Common myeloid progenitor, CD34-positive (primary cell): ENCODE measurements at regions of chr22 and their contacts with region 1.

Region 1: GRCh38 chr22:50293441-50294318 is 13.8 kb downstream of the PLXNB2 start:
- DNase-seq: peak; percentile 53 to 90 (median 88)
- H3K4me3 ChIP-seq: peak overlapping the region in 6 of 7 experiments; percentile 35 to 70 (median 67)
- H3K27ac ChIP-seq: peak overlapping the region; percentile 15 to 74
- H3K4me1 ChIP-seq: peaks cover 0 to 55% (median 52%) of the 10 kb centered on the region in 4 experiments
- H3K27me3 ChIP-seq: no peaks in the 10 kb centered on the region

Region 2: DNA sequence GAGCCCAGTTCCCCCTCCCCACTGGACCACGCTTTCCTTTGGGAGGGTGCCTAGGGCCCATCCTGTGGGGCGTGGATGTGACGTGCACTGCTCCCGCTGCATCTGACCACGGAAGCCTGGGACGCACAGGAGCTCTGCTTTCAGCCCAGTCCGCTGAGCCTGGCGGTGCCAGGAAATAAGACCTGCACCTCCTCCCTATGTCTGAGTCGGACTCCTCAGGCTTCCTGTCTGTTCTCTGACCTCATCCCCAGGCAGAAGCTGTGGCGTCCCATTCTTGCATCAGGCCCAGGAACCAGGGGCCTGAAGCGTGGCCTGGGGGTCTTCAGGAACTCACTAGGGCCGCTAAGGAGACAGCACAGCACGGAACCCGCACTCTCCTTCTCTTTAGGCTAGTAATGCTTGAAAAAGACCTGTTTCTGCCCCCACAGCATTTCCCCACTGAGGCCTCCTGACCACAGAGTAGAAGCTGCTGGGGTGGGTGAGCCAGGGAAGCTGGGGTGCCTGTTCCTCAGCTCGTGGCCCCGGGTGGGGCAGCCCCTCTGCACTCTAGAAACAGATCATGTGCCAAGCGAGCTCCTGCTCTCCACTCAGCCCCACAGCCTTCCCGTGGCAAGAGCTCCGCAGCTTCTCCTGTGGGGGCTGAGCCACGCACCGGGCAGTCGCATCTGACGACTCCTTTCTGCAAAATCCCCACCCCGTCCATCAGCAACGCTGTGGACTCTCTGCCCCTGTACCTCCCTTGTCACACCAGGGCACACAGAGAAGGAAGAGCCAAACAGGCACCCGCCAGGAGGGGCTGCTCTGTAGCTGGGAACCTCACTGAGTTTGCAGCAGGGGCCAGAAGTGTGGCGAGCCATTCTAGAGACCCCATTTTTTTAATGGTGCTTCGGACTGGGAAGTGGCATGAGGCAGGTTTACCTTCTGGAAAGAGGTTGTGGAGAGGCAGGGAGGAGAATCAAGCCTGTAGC is 181.2 kb before region 1 on chr22:
- CTCF ChIA-PET with region 1: no interaction called
- POLR2A ChIA-PET with region 1: no interaction called
- DNase-seq: peak; percentile 55 to 85 (median 78)
- H3K4me3 ChIP-seq: peak overlapping the region in 4 of 7 experiments; percentile 28 to 66 (median 46)
- H3K27ac ChIP-seq: peak overlapping the region; percentile 66 to 83
- H3K4me1 ChIP-seq: peaks cover 2 to 30% (median 25%) of the 10 kb centered on the region in 4 experiments
- H3K27me3 ChIP-seq: no peaks in the 10 kb centered on the region

Region 3: GRCh38 chr22:50306753-50307749 is 13.4 kb after region 1 on chr22 and contains the start of gene PLXNB2:
- CTCF ChIA-PET with region 1: interaction called, 37 read pairs
- POLR2A ChIA-PET with region 1: interaction called, 24 read pairs
- DNase-seq: peak; percentile 52 to 76 (median 71)
- H3K4me3 ChIP-seq: peak within 1 kb of the TSS; percentile 59 to 86 (median 80)
- H3K27ac ChIP-seq: peak within 1 kb of the TSS; percentile 40 to 71
- H3K4me1 ChIP-seq: peaks cover 0 to 75% (median 66%) of the 10 kb centered on the region in 4 experiments
- H3K27me3 ChIP-seq: no peaks in the 10 kb centered on the region

Region 4: GRCh38 chr22:50314455-50315288 is 21.0 kb after region 1 on chr22:
- CTCF ChIA-PET with region 1: interaction called, 13 read pairs
- POLR2A ChIA-PET with region 1: interaction called, 20 read pairs
- DNase-seq: peak; percentile 78 to 95 (median 90)
- H3K4me3 ChIP-seq: peak overlapping the region; percentile 21 to 76 (median 50)
- H3K27ac ChIP-seq: peak overlapping the region; percentile 72 to 92
- H3K4me1 ChIP-seq: peaks cover 0 to 38% (median 34%) of the 10 kb centered on the region in 4 experiments
- H3K27me3 ChIP-seq: no peaks in the 10 kb centered on the region

Region 5: DNA sequence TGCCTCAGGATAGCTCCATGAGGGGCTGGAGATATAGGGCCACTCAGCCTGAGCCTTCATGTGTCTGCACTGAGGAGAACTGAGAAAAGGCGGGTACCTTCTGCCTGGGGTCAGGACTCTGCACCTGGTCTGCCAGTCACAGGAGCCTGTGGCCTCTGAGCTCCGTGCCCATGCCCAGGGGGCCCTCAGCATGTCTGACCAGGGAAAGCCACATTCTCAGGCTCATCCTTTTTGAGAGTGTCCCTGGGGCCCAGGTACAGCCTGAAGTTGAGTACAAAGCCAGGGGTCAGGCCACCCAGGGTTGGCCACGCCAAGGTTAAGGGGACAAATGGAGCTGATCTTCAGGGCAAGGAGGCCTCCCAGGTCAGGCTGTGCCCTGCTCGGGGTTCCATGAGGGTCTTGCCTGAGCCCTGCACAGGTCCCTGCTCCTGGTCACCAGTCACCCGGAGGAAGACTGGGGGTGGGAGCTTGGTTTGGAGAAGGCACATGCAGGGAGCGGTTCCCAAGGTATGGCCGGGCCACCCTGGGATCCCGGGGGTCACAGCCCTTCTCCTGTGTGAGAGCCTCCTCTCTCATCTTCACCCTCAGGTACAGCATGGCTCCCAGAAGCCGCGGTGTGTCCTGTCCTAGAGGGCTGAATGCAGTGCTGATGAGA is 27.1 kb after region 1 on chr22:
- CTCF ChIA-PET with region 1: interaction called, 13 read pairs
- POLR2A ChIA-PET with region 1: interaction called, 4 read pairs
- DNase-seq: no peak
- H3K4me3 ChIP-seq: no peak overlapping the region
- H3K27ac ChIP-seq: no peak overlapping the region
- H3K4me1 ChIP-seq: peaks cover 0 to 8% (median 2%) of the 10 kb centered on the region in 4 experiments
- H3K27me3 ChIP-seq: peaks cover 0 to under 1% (median 0%) of the 10 kb centered on the region in 5 experiments